ENCODE measurements at regions of chr4 and their contacts with region 1.

Region 1: DNA sequence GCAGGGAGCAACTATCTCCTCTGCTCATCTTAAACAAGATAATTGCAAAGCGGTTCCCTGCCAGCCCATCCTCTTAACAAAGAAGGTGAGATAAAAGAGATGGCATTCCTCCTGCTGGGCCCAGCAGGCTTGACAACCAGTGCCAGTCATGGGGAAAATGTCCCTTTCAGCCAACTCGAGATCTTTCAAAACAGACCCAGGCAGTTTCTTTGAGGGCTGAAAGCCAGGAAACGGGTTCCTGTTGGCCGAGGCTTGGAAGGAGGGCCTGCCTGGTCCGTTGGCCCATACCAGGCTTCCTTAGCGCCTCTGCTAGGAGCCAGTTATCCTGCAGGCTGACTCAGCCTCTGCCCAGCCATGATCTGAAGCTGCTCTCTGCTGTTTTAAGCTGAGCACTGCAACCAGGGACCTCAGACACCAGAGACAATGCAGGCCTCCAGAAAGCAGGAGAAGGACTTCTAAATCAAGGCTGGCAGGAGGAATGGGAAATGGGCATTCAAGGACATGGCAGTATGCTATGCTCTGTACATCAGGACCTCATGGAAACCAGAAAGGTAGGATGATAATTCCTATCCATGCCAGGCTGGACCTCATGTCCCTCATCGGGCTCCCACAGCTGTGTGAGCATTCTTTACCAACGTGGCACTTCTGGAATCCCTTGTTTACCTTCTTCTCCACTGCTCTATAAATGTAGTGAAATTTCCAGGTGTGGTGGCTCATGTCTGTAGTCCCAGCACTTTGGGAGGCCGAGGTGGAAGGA is 42.4 kb upstream of the SLC2A9 start:
- DNase-seq: peak; percentile 9
- H3K4me3 ChIP-seq: no peak overlapping the region
- H3K27me3 ChIP-seq: no peaks in the 10 kb centered on the region
- CTCF ChIP-seq: peak; percentile 78

Region 2: GRCh38 chr4:9762823-9763475 is 300.8 kb before region 1 on chr4:
- CTCF ChIA-PET with region 1: interaction called, 15 read pairs
- POLR2A ChIA-PET with region 1: no interaction called
- DNase-seq: no peak
- H3K4me3 ChIP-seq: no peak overlapping the region
- H3K27me3 ChIP-seq: no peaks in the 10 kb centered on the region
- CTCF ChIP-seq: peak; percentile 72

Region 3: DNA sequence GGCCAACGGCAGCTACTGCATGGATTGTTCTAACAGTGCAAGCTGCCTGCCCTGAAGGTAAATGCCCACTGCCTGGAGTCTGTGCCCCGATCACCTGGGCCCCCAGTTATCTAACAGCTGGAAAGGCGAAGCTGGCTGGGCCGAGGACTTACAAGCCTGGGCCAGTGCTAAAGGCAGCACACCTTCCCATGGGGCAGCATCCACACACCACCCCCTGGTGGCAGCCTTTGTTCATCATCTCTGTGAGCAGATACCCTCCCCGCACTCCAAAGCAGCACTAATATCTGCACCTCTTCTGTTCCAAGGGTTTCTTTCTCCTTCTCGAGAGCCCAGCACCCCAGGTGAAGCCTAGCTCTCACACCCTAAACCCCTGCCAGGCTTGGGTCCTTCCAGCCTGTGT is 50.0 kb before region 1 on chr4:
- CTCF ChIA-PET with region 1: interaction called, 27 read pairs
- POLR2A ChIA-PET with region 1: no interaction called
- DNase-seq: no peak
- H3K4me3 ChIP-seq: no peak overlapping the region
- H3K27me3 ChIP-seq: no peaks in the 10 kb centered on the region
- CTCF ChIP-seq: peak; percentile 59

Region 4: DNA sequence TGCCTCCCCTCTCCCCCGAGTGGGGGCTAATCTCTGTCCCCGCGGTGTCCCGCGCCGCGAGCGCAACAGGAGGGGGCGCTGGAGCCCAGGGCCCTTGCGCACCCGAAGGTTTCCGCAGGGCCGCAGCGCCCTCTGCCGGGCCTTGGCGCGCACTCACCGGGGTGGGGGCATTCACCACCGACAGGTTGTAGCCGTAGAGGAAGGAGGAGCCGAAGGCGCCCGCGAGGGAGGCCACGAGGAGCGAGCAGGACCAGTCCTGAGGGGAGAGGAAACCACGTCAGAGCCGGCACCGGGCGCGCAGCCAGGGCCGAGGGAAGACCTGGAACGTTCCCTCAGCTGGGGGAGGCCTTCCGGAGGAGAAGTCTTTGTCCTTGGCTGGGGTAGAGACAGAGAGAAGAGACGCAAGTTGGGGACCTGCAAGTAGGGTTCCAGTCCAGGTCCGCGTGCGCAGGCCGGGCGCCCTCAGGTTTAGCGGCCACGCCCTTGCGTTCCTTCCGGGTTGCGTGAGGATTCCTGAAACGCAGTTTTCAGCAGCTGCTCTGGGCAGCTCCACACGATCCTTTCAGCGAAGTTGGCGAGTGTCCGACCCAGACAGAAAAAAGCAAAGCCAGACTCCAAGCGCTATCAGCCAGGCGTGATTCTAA is 44.8 kb before region 1 on chr4:
- CTCF ChIA-PET with region 1: interaction called, 27 read pairs
- POLR2A ChIA-PET with region 1: interaction called, 3 read pairs
- DNase-seq: peak; percentile 76
- H3K4me3 ChIP-seq: peak overlapping the region; percentile 47
- H3K27me3 ChIP-seq: no peaks in the 10 kb centered on the region
- CTCF ChIP-seq: peak; percentile 100

Region 5: DNA sequence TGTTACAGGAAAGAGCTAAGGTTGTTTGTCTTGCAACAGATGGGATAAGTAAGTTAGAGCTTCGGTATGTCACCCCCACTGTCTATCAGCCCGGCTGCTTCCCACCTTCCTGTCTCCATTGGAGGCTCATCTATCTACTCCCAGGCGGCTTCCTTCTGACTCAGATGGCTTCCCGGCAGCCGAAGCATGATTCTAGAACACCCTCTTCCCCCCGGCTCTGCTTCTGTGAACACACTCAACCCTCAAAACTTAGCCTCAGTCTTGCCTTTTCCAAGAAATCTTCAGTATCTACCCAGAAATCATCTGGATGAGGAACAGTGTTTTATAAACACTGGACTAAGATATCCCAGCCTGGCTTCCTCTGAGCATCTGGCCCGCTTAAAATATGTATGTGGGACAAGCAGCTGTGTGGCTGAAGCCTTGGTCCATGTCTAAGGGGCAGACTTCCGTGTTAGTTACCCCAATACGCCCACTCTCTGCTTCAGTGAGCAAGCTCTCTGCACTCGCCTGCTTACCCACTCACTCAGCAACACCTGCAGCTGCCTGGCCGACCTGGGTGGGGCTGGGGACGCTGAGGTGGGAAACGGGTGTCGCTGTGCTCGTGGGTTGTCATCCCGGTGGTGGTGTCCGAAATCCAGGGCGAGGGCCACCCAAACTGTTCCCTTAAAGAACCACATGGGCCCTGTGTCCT is 30.4 kb before region 1 on chr4:
- CTCF ChIA-PET with region 1: interaction called, 11 read pairs
- POLR2A ChIA-PET with region 1: no interaction called
- DNase-seq: no peak
- H3K4me3 ChIP-seq: no peak overlapping the region
- H3K27me3 ChIP-seq: no peaks in the 10 kb centered on the region
- CTCF ChIP-seq: no peak

Region 6: GRCh38 chr4:10130178-10130888 is 66.6 kb after region 1 on chr4:
- CTCF ChIA-PET with region 1: no interaction called
- POLR2A ChIA-PET with region 1: no interaction called
- DNase-seq: no peak
- H3K4me3 ChIP-seq: no peak overlapping the region
- H3K27me3 ChIP-seq: peaks cover 9% of the 10 kb centered on the region
- CTCF ChIP-seq: no peak

Region 7: DNA sequence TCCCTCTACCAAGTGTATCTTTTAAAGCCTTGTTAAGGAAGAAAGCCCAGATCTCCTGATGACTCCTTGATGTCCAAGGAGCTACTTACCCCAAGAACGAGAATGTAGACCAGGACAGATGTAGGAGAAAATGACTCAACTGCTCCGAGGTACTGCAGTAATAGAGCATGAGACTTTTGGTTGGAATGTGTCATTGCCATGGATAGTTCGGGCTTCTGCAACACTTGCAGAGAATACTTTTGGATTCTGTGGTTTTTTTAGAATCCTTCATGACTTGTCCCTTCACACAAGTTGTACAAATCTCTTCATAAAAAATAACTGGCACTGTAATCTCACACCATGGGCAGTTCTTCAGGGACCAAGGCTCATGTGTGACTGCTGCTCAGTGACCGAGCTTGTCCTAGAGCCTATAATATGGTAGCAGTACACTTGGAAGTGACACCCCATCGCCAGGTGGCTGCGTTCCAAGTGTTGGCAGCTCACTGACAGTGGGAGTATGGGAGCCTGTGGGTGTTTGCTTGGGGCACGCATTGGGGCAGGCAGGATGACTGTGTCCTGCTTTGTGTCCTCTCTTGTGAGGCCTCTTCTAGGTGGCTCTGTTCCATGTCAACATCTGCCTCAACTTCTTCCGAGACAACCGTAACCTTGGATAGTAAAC is 140.8 kb after region 1 on chr4:
- CTCF ChIA-PET with region 1: no interaction called
- POLR2A ChIA-PET with region 1: no interaction called
- DNase-seq: peak; percentile 77
- H3K4me3 ChIP-seq: no peak overlapping the region
- H3K27me3 ChIP-seq: 0 out of 2 replicates have a peak, but pooled peaks cover 2% of the 10 kb centered on the region
- CTCF ChIP-seq: no peak

Region 8: DNA sequence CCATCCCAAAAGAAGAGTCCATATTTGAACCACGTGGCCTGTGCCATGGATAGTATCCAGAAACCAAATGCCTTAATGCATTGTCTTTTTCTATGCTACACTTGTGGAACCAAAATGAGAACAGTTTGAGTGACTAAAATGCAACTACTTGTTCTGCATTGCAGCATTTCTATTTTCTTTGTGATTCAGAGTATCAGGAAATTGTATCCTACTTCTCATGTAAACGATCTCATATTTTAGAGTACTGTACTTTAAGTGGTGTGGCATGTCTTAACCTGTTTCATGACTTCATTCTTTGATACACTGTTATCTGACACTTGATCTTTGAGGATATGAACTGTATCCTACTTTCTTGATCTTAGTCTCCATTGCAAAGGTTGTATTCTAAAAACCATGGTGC is 220.0 kb after region 1 on chr4:
- CTCF ChIA-PET with region 1: no interaction called
- POLR2A ChIA-PET with region 1: no interaction called
- DNase-seq: no peak
- H3K4me3 ChIP-seq: no peak overlapping the region
- H3K27me3 ChIP-seq: no peaks in the 10 kb centered on the region
- CTCF ChIP-seq: no peak

Region 9: GRCh38 chr4:10478621-10479020 is 414.9 kb after region 1 on chr4:
- CTCF ChIA-PET with region 1: no interaction called
- POLR2A ChIA-PET with region 1: no interaction called
- DNase-seq: no peak
- H3K4me3 ChIP-seq: no peak overlapping the region
- H3K27me3 ChIP-seq: no peaks in the 10 kb centered on the region; the same call in 1 of the 2 replicates
- CTCF ChIP-seq: no peak

Measured in BJ (cell line).